Spleen (tissue), 13 donors: ENCODE measurements at regions of chr20 and their contacts with region 1.

Region 1: GRCh38 chr20:62793912-62794724 is 2.2 kb upstream of the MRGBP start:
- DNase-seq: peak; percentile 100
- H3K4me3 ChIP-seq: peak overlapping the region; percentile 47 to 73 (median 64)
- H3K27ac ChIP-seq: peak overlapping the region; percentile 89 to 98 (median 94)
- H3K4me1 ChIP-seq: peaks cover 5 to 70% (median 45%) of the 10 kb centered on the region in 6 donors
- H3K27me3 ChIP-seq: no peaks in the 10 kb centered on the region
- CTCF ChIP-seq: peak in 3 of 11 experiments; percentile 22 to 39 (median 24)
- POLR2A ChIP-seq: peak; percentile 62 to 75 (median 62)

Region 2: DNA sequence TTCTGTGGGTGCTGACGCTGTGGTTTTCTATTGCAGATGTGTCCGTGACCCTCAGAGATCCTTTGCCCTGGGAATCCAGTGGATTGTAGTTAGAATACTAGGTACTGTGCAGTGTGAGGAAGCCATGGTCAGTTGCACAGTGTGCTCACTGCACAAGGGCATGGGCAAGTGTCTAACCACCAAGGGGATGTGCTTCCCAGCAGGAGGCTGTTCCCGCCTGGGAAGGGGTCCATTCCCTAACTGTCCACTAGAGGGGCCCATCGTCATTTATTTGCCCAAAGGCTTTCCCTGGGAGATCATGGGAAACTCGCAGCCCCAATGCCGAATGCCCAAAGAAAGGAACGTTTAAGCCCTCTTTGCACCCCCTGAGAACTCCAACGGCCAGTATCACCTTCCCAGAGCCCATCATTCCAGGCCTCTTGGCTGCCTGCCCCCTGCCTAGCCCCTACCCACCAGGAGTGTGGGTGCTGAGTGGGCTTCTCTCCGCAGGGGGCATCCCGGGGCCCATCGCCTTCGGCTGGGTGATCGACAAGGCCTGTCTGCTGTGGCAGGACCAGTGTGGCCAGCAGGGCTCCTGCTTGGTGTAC is 125.6 kb before region 1 on chr20:
- intact Hi-C with region 1: loop called (anchors 5 kb)
- DNase-seq: no peak
- H3K4me3 ChIP-seq: no peak overlapping the region
- H3K27ac ChIP-seq: no peak overlapping the region
- H3K4me1 ChIP-seq: peaks cover 0 to 50% (median 17%) of the 10 kb centered on the region in 6 donors
- H3K27me3 ChIP-seq: no peaks in the 10 kb centered on the region
- CTCF ChIP-seq: peak; percentile 79 to 93 (median 89)
- POLR2A ChIP-seq: no peak

Region 3: GRCh38 chr20:63135411-63135810 is 341.3 kb after region 1 on chr20:
- intact Hi-C with region 1: no loop called
- DNase-seq: peak; percentile 46
- H3K4me3 ChIP-seq: no peak overlapping the region
- H3K27ac ChIP-seq: no peak overlapping the region
- H3K4me1 ChIP-seq: no peaks in the 10 kb centered on the region
- H3K27me3 ChIP-seq: peaks cover 0 to 49% (median 8%) of the 10 kb centered on the region in 7 donors
- CTCF ChIP-seq: no peak
- POLR2A ChIP-seq: no peak